ENCODE measurements at regions of chr7 and their contacts with region 1.

Region 1: GRCh38 chr7:129218514-129219062 is 6.2 kb upstream of the AHCYL2 start:
- DNase-seq: peak; percentile 90
- H3K4me3 Mint-ChIP-seq: no peak overlapping the region
- H3K27ac Mint-ChIP-seq: no peak overlapping the region
- H3K4me1 Mint-ChIP-seq: peaks cover 17% of the 10 kb centered on the region
- H3K27me3 Mint-ChIP-seq: no peaks in the 10 kb centered on the region

Region 2: DNA sequence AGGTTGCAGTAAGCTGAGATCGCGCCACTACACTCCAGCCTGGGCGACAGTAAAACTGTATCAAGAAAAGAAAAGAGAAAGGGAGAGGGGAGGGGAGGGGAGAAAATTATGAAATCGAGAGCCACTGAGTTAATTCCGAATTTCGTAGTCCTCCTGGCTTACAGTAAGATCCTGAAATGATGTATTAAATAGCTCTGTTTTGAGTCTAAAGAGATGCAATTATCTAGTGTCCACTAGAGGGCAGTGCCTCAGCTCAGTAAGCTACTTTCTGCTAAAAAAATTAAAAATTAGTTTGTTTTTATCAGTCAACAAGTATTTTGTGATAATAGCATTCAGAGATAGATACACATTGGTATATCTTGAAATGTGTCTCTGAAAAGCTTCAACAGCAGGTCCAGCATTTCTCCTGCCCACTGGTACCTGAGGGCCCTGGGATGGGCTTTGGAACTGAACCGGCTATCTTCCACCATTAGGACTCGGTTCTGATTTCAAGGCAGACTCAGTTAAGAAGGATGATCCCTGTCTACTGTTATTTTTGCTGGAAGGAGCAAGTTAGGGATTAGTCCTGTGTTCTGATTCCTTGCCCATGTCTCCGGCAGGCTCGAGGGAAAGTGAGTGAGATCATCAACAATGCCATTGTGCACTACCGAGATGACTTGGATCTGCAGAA is 54.6 kb before region 1 on chr7:
- CTCF ChIA-PET with region 1: interaction called, 122 read pairs
- intact Hi-C with region 1: no loop called
- DNase-seq: peak; percentile 21
- H3K4me3 Mint-ChIP-seq: no peak overlapping the region
- H3K27ac Mint-ChIP-seq: no peak overlapping the region
- H3K4me1 Mint-ChIP-seq: peaks cover 4% of the 10 kb centered on the region
- H3K27me3 Mint-ChIP-seq: no peaks in the 10 kb centered on the region

Region 3: GRCh38 chr7:129240119-129240815 is 21.7 kb after region 1 on chr7:
- CTCF ChIA-PET with region 1: interaction called, 17 read pairs
- intact Hi-C with region 1: no loop called
- DNase-seq: no peak
- H3K4me3 Mint-ChIP-seq: no peak overlapping the region
- H3K27ac Mint-ChIP-seq: no peak overlapping the region
- H3K4me1 Mint-ChIP-seq: peaks cover 2% of the 10 kb centered on the region
- H3K27me3 Mint-ChIP-seq: no peaks in the 10 kb centered on the region

Region 4: DNA sequence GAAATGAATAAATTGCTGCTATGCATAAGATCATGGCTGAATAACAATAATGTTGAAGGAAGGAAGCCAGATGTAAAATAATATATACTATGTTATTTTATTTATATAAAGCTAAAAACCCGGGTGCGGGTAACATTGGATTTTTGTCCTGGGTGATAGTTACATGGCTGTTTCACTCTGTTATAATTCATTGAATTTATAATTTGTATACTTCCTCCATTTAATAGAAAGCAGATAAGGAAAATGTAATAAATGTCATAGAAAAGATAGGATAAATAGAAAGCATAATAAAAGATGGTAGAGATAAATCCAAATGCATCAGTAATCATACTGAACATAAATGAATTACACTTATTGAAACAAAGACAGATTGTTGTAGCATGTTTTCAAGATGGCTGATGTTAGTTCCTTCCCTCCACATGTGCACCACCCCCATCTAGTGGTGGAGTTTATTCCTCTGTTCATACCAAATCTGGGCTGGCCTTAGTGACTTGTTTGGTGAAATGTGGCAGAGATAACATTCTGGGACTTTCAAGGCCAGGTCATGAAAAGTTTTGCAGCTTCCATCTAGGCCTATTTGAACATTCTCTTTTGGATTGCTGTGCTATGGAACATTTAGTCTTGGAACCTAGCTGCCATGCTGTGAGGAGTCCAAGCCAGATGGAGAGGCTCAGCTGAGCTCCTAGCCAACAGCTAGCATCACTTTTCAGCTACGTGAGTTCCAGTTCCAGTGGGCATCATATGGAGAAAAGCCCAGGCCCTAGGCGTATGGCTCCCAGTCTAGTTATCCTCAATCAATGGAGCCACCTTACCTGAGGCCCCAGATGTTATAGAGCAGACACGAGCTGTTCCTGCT is 53.1 kb after region 1 on chr7:
- CTCF ChIA-PET with region 1: interaction called, 234 read pairs
- intact Hi-C with region 1: loop called (anchors 1 kb)
- DNase-seq: peak; percentile 84
- H3K4me3 Mint-ChIP-seq: peak overlapping the region; percentile 63
- H3K27ac Mint-ChIP-seq: peak overlapping the region; percentile 73
- H3K4me1 Mint-ChIP-seq: peaks cover 9% of the 10 kb centered on the region
- H3K27me3 Mint-ChIP-seq: no peaks in the 10 kb centered on the region

Region 5: DNA sequence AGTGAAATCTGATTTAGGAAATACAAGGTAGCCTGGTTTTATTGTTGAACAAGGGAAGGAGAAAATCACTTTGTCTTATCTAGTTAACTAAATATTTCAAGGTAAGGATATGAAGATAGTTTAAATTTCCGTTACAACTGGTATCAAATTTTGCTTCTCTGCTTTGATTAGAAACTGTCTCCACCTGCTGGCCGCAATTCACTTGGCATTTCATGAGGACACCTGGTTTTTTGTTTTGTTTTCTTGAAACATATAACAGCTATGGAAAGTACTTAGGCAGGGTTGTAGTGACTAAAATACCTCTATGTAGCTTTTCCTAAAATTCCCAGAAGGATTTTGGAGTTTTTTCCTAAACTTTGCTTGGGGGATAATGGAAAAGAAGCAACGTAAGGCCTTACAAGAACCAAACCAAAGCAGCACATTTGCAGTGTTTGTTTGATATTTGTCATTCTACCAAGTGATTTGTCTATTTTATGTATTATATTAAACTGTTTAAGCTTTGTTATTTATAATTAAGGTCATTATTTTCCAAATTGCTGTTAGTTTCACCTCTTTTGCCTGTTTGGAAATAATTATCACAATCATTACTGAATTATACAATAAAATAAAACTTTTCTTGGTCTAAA is 79.8 kb after region 1 on chr7:
- CTCF ChIA-PET with region 1: interaction called, 112 read pairs
- intact Hi-C with region 1: loop called (anchors 1 kb)
- DNase-seq: peak; percentile 82
- H3K4me3 Mint-ChIP-seq: no peak overlapping the region
- H3K27ac Mint-ChIP-seq: no peak overlapping the region
- H3K4me1 Mint-ChIP-seq: no peaks in the 10 kb centered on the region
- H3K27me3 Mint-ChIP-seq: no peaks in the 10 kb centered on the region

Region 6: DNA sequence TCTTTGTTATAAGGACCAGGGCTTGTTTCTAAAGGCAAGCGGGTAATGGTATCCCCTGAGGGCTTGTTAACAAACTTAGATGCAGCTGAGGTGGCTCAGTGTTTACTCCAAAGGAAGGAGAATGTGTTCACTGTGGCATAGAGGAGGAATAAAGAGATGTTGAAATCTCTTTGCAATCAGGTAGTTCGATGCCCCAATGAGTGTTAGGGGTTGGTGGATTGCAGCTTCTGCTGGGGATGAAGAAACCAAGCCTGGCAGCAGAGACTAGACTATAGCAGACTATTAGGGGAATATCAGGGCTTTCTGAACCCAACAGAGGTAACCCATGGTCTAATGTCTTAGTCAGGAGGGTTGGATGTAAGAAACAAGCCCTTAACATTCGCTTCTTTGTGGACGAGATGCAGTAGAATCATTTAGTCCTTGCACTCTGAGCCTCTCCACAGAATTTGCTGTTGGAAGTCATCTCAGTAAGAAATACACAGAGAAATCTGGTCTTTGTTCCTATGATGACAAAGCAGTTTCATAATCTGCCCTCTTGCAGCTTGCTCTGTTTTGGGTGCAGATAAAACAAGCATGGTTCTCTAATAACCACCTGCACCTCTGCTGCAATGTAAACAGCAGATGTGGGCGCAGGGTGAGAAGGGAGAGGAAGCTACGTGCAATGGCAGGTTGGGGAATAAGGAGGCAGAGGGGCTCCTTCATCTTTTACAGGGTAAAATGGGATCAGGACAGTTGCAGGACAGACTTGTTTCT is 501.6 kb after region 1 on chr7:
- CTCF ChIA-PET with region 1: no interaction called
- intact Hi-C with region 1: no loop called
- DNase-seq: no peak
- H3K4me3 Mint-ChIP-seq: no peak overlapping the region
- H3K27ac Mint-ChIP-seq: no peak overlapping the region
- H3K4me1 Mint-ChIP-seq: no peaks in the 10 kb centered on the region
- H3K27me3 Mint-ChIP-seq: no peaks in the 10 kb centered on the region

Region 7: GRCh38 chr7:129825496-129826267 is 607.1 kb after region 1 on chr7:
- CTCF ChIA-PET with region 1: no interaction called
- intact Hi-C with region 1: loop called (anchors 1 kb)
- DNase-seq: peak; percentile 89
- H3K4me3 Mint-ChIP-seq: peak overlapping the region; percentile 90
- H3K27ac Mint-ChIP-seq: no peak overlapping the region
- H3K4me1 Mint-ChIP-seq: peaks cover 21% of the 10 kb centered on the region
- H3K27me3 Mint-ChIP-seq: no peaks in the 10 kb centered on the region